Activated CD4-positive, alpha-beta memory T cell treated with anti-CD3 and anti-CD28 coated beads for 36 hours (primary cell): ENCODE measurements at regions of chr17 and their contacts with region 1.

Region 1: GRCh38 chr17:7306911-7307686 is at the start of gene EIF5A:
- DNase-seq: peak; percentile 100
- H3K4me3 Mint-ChIP-seq: peak within 1 kb of the TSS; percentile 85
- H3K27ac Mint-ChIP-seq: peak within 1 kb of the TSS; percentile 97
- H3K4me1 Mint-ChIP-seq: peaks cover 29% of the 10 kb centered on the region
- H3K27me3 Mint-ChIP-seq: peaks cover 2% of the 10 kb centered on the region
- total RNA-seq, gene EIF5A: 774 to 776 TPM

Region 2: DNA sequence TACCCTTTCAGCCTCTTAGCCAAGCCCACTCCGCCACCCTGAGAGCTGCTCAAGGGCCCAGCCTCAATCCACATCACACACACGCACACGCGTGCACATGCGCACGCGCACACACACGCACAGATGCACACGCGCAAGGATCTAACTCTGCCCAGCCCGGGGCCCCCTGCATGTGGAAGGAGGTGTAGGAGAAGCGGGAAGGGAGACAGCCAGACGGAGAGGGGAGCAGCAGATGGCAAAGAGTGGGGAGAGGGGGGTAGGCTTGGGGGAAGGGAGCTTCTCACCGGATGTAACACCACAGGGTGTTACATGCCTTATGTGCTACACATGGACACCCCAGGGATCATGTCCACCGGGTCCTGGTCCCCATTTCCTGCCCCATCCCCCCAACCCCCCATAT is 102.8 kb before region 1 on chr17:
- CTCF ChIA-PET with region 1: no interaction called
- POLR2A ChIA-PET with region 1: no interaction called
- intact Hi-C with region 1: no loop called
- DNase-seq: no peak
- H3K4me3 Mint-ChIP-seq: peak overlapping the region; percentile 36
- H3K27ac Mint-ChIP-seq: peak overlapping the region; percentile 30
- H3K4me1 Mint-ChIP-seq: peaks cover 21% of the 10 kb centered on the region
- H3K27me3 Mint-ChIP-seq: no peaks in the 10 kb centered on the region

Region 3: GRCh38 chr17:7214300-7215135 is 92.6 kb before region 1 on chr17:
- CTCF ChIA-PET with region 1: no interaction called
- POLR2A ChIA-PET with region 1: interaction called, 4 read pairs
- intact Hi-C with region 1: loop called (anchors 2 kb)
- DNase-seq: peak; percentile 100
- H3K4me3 Mint-ChIP-seq: peak overlapping the region; percentile 85
- H3K27ac Mint-ChIP-seq: peak overlapping the region; percentile 89
- H3K4me1 Mint-ChIP-seq: peaks cover 52% of the 10 kb centered on the region
- H3K27me3 Mint-ChIP-seq: peaks cover 7% of the 10 kb centered on the region

Region 4: DNA sequence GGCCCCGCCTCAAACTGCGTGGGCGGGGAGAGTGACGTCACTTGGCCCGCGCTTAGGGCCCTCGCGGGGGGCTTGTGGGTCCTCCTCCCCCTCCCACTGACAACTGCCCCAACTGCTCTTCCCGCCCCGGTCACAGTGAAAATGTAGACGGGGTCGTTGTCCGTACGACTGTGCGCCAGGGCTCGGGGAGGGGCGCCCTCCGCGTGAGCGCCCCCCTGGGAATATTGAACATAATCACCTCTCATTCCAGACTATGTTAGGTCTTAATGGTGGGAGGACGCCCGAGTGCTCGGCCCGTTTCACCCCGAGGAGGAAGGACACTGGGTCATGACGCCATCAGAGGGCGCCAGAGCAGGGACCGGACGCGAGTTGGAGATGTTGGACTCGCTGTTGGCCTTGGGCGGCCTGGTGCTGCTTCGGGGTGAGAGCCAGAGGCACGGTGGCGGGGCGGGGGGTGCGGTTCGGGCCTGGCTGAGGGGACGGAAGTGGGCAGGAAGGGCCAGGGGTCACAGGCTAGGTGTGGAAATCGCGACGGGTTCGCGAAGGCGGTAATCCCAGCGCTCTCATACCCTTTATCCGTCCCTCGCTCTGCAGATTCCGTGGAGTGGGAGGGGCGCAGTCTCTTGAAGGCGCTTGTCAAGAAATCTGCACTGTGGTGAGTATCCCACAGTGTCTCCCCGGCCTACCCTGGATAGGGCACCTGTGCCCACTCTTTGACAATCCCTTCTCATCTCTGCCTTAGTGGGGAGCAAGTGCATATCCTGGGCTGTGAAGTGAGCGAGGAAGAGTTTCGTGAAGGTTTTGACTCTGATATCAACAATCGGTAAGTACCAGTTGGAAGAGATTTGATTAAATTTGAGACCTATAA is 54.7 kb before region 1 on chr17 and contains the start of gene ELP5:
- CTCF ChIA-PET with region 1: no interaction called
- POLR2A ChIA-PET with region 1: interaction called, 5 read pairs
- intact Hi-C with region 1: loop called (anchors 1 kb)
- DNase-seq: peak; percentile 94
- H3K4me3 Mint-ChIP-seq: peak within 1 kb of the TSS; percentile 96
- H3K27ac Mint-ChIP-seq: peak within 1 kb of the TSS; percentile 100
- H3K4me1 Mint-ChIP-seq: peaks cover 40% of the 10 kb centered on the region
- H3K27me3 Mint-ChIP-seq: no peaks in the 10 kb centered on the region
- total RNA-seq, gene ELP5: 49.6 to 52.4 TPM

Region 5: DNA sequence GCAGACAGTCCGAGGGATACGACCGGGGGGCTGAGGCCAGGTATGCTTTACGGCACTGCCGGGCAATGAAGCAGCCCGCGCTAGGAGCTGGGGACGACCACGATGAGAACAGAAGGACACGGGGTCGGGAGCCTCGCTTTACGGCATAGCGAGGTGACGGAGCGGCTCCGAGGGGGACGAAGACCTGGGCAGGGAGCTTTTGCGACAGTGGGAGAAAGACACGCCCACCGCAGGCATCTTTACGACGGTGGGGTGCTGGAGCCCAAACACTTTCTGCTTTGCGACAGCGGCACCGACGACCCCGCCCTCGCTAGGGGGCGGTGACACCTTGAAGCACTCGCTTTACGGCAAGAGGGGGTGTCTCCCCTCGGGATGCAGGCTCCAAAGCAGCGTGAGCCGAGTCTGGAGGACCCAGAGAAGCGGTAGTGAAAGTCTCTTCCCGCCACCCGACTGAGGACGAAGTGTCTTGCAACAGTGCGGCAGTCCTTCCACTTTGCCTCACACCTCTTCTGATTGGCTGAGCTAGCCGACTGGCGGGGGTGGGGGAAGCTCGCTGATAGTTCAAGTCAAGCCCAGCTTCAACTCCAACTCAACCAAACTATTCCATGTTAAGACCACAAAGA is 22.4 kb after region 1 on chr17:
- CTCF ChIA-PET with region 1: interaction called, 9 read pairs
- POLR2A ChIA-PET with region 1: interaction called, 13 read pairs
- intact Hi-C with region 1: loop called (anchors 1 kb)
- DNase-seq: peak; percentile 98
- H3K4me3 Mint-ChIP-seq: peak overlapping the region; percentile 89
- H3K27ac Mint-ChIP-seq: peak overlapping the region; percentile 94
- H3K4me1 Mint-ChIP-seq: peaks cover 41% of the 10 kb centered on the region
- H3K27me3 Mint-ChIP-seq: no peaks in the 10 kb centered on the region

Region 6: DNA sequence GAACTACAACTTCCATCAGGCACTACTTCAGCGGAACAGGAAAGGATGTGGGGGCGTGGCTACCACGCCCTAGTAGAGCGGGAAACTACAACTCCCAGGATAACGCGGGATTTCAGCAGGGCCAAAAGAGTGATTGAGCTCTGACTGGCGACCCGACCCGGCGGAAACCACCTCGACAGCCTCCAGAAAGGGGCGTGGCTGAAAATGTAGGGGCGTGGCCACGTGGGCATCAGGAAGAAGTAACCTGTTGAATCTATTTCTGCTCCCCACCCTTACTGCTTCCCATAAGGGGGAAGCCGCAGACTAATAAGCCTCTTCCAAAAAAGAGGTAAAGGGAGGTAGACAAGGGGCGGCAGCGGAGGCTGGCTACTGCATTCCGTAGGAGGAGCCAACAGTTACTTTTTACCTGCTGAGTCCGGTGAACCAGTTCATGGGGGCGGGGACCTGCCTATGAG is 128.1 kb after region 1 on chr17 and contains the start of gene TMEM102:
- CTCF ChIA-PET with region 1: no interaction called
- POLR2A ChIA-PET with region 1: interaction called, 3 read pairs
- intact Hi-C with region 1: loop called (anchors 1 kb)
- DNase-seq: peak; percentile 99
- H3K4me3 Mint-ChIP-seq: peak within 1 kb of the TSS; percentile 91
- H3K27ac Mint-ChIP-seq: peak within 1 kb of the TSS; percentile 95
- H3K4me1 Mint-ChIP-seq: peaks cover 36% of the 10 kb centered on the region
- H3K27me3 Mint-ChIP-seq: peaks cover 15% of the 10 kb centered on the region
- total RNA-seq, gene TMEM102: 11.4 to 11.6 TPM

Region 7: GRCh38 chr17:7844292-7845154 is 537.4 kb after region 1 on chr17:
- CTCF ChIA-PET with region 1: no interaction called
- POLR2A ChIA-PET with region 1: no interaction called
- intact Hi-C with region 1: loop called (anchors 5 kb)
- DNase-seq: peak; percentile 92
- H3K4me3 Mint-ChIP-seq: peak overlapping the region; percentile 85
- H3K27ac Mint-ChIP-seq: peak overlapping the region; percentile 95
- H3K4me1 Mint-ChIP-seq: peaks cover 45% of the 10 kb centered on the region
- H3K27me3 Mint-ChIP-seq: no peaks in the 10 kb centered on the region